Activated CD8-positive, alpha-beta T cell treated with anti-CD3 and anti-CD28 coated beads, Interleukin-2, amount 10 ng/mL, durations not matched to agents 7 days and 5 days (primary cell): ENCODE measurements at regions of chr1 and their contacts with region 1.

Region 1: DNA sequence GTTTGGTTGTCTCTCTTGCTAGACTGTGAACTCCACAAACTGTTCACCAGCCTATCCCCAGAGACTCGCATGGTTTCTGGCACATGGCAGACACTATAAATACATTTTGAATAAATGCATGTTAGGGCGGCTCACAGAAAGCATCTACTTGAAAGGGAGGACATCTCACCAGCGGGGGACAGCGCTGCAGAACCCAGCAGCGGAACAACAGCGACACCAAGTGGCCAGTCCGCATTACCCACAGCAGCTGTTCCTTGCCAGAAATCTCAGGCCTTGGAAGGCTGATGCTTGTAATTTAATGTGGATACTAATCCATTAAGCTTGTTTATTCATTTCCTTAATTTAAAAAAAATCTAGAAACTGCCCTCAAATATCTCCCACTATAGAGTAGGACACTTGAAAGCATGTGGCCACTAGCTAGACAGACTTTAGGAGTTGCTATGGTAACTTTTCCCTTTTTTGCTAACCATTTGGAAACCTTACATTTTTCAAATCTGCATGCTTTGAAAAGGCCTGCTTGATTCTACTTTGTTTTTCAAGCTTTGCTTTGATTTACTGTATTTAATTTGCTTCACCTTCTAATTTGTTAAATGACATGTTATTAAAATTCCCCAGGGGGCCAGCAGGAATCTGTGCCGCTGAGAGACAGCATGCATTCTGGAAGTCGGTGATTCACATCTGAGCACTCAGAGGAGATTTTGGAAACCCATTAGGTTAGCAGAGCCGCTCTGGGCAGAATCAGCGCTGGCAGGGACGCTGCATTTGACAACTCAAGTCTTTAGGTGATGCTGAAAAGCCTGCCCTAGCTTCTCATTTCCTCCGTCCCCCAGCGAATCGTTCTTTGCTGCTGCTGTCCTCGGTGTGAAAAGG is 63.5 kb upstream of the SSX2IP start:
- DNase-seq: peak; percentile 80
- ATAC-seq: peak; percentile 92
- H3K4me3 Mint-ChIP-seq: no peak overlapping the region
- H3K27ac Mint-ChIP-seq: no peak overlapping the region
- H3K4me1 Mint-ChIP-seq: peaks cover 5% of the 10 kb centered on the region
- H3K27me3 Mint-ChIP-seq: peaks cover 24% of the 10 kb centered on the region

Region 2: DNA sequence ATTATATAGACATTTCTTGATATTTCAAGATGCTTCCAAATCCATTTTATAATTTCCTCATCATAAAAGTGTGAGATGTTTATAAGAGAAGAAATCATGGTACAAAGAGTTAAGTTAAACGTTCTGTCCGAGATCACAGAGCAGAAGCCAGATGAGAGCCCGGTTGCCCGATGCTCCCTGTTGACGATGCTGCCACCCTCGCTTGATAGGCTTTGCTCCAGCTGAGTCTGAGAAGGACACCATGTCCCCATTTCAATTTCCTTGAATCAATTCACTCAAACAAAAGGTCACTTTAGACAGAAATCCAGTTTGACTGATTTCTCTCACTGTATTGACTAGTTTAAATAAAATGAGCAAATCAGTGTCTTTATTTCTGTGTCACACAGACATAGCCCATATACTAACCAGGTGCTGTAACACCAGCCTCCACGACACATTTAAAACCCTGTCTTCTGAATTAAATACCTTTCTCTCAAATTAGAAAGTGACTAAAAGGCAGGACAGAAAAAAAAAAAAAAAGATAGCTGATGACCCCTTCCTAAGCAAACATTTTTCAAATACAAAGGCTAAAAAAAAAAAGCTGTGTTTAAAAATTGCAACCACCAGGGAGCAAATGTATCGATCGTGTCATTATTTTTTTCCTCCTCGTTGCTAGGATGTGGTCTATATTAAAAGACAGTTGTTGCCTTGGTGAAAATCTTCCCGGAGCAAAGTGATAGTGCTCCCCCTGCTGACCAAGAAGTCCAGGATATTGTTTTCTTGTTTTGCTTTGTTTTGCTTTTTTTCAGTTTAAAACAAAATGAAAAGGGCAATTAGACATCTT is 320.3 kb before region 1 on chr1:
- CTCF ChIA-PET with region 1: interaction called, 10 read pairs
- POLR2A ChIA-PET with region 1: no interaction called
- DNase-seq: peak; percentile 80
- ATAC-seq: peak; percentile 74
- H3K4me3 Mint-ChIP-seq: peak overlapping the region; percentile 66
- H3K27ac Mint-ChIP-seq: peak overlapping the region; percentile 58
- H3K4me1 Mint-ChIP-seq: peaks cover 10% of the 10 kb centered on the region
- H3K27me3 Mint-ChIP-seq: no peaks in the 10 kb centered on the region

Region 3: GRCh38 chr1:84823511-84823910 is 69.8 kb after region 1 on chr1:
- CTCF ChIA-PET with region 1: no interaction called
- POLR2A ChIA-PET with region 1: no interaction called
- DNase-seq: no peak
- ATAC-seq: no peak
- H3K4me3 Mint-ChIP-seq: no peak overlapping the region
- H3K27ac Mint-ChIP-seq: no peak overlapping the region
- H3K4me1 Mint-ChIP-seq: peaks cover 3% of the 10 kb centered on the region
- H3K27me3 Mint-ChIP-seq: peaks cover 4% of the 10 kb centered on the region

Region 4: DNA sequence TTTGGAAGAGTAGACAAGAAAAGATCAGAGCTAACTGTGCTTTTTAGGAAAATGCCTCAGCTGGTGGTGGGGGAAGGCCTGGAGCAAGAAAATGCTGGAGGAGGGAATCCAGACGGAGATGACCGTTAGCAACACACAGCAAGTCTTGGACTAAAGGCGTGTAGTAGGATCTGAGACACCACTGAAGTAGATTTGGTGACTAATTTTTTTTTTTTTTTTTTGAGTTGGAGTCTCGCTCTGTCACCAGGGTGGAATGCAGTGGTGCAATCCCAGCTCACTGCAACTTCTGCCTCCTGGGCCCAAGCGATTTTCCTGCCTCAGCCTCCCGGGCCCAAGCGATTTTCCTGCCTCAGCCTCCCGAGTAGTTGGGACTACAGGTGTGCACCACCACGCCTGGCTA is 98.1 kb after region 1 on chr1:
- CTCF ChIA-PET with region 1: no interaction called
- POLR2A ChIA-PET with region 1: no interaction called
- DNase-seq: no peak
- ATAC-seq: no peak
- H3K4me3 Mint-ChIP-seq: no peak overlapping the region
- H3K27ac Mint-ChIP-seq: no peak overlapping the region
- H3K4me1 Mint-ChIP-seq: peaks cover 42% of the 10 kb centered on the region
- H3K27me3 Mint-ChIP-seq: no peaks in the 10 kb centered on the region

Region 5: DNA sequence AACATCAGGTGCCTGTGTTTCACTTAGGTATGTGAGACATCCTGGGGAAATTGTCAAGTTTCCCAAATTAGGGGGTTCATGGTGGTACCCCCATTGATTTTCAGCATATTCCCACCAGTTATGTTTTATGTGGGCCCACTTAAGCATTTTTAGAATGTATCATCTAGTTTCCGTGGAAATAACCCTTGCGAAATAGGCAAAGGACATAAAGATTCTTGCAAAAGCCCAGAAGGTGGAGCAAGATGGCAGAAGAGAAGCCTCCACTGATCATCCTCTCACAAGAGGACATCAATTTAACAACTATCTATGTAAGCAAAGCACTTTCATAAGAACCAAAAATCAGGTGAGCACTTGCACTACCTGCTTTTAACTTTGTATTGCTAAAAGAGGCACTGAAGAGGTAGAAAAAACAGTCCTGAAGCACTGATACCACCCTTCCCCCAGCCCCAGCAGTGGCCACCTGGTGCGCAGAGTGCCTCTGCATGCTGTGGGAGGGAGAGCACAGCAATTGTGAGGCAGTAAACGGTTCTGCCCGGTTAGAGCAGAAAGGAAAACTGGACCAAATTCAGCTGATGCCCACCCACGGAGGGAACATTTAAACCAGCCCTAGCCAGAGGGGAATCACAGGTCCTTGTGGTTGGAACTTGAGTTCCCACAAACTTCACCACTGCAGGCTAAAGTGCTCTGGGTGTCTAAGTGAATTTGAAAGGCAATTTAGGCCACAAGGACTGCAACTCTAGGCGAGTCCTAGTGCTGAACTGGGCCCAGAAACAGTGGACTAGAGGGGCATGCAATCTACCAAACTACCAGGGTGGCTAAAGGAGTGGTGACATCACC is 220.0 kb after region 1 on chr1:
- CTCF ChIA-PET with region 1: no interaction called
- POLR2A ChIA-PET with region 1: no interaction called
- DNase-seq: no peak
- ATAC-seq: no peak
- H3K4me3 Mint-ChIP-seq: no peak overlapping the region
- H3K27ac Mint-ChIP-seq: peak overlapping the region; percentile 56
- H3K4me1 Mint-ChIP-seq: peaks cover 55% of the 10 kb centered on the region
- H3K27me3 Mint-ChIP-seq: peaks cover 2% of the 10 kb centered on the region